ENCODE measurements at regions of chr13 and their contacts with region 1.

Region 1: DNA sequence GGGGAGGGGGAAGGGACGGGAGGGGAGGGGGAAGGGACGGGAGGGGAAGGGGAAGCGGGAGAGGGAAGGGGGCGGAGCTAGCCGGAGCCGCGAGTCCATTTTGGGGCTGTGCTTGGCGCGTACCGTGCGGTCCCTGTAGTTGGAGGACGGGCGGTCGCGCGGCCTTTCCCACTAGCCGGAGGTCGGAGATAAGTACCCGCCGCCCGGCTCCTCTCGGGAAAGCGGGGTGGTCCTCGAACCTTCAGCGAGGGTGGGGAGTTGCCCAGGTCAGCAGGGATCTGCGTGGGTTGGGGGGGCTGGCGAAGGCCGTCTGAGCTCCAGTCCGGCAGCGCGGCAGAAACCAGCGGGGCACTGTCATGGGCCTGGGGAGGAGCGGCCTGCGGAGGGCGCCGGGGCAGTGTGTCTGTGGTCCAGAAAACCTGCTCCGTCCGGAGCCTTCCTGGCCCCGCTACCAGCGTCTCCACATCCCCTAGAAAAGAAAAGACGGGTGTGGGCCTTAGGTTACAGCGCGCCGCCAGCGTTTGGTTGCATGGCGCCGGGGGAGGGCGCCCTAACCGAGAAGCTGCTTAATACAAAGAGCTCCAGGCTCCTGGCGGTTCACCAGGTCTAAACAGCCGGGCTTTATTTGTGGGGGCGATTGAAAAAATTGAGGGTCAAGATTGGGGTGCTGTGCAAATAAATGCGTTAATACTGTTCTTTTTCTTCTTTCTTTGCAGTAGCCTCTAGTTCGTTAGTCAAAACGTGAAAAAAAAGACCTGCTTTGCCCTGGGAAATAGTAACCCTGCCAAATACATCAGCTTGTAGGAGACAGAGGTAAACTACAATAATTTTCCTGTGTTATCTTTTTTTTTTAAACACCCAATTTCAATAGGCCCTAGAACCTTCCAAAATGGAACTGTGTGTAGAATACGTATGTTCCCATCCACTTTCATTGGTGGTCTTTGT is at the start of gene TRIM13:
- DNase-seq: peak; percentile 88
- CTCF ChIP-seq: peak; percentile 76

Region 2: DNA sequence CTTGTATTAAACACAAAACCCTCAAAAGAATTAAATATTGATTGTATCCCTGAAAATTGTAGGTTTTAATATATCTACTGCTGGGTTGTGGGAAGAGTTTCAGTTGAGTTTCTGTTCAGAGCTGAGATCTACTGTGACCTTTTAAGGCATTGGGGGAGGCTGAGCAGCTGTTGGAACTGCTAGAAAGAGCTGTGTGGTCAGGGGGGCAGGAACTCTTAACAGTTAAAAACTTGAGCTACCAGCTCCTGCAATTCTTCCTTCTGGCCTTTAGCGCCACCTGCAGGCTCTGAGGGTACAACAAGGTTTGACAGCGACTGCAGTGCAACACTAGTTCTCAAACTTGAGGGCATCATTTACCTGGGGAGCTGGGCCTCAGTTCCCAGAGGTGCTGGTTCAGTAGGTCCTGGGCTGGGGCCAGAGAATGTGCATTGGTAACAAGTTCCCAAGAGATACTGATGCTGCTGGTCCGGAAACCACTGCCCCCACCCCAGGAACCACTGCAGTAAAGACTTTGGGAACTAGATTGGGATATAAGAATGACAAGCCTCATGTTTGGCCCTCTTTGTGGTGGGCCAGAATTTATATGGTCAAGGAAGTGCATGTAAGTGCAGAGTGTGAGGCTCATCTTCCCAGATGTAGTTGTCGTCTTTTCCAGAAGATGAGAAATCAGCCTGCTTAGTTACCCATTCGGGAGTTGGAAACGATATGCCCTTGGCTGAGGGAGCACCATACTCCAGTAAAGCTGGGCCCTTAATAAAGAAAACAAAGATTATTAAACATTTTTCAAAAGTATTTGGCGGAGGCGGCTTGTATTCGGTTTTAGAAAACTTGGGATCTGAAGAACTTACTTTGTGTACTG is 914.9 kb after region 1 on chr13:
- in situ Hi-C with region 1: loop called (anchors 10 kb)
- DNase-seq: peak; percentile 80
- CTCF ChIP-seq: peak; percentile 78

Region 3: DNA sequence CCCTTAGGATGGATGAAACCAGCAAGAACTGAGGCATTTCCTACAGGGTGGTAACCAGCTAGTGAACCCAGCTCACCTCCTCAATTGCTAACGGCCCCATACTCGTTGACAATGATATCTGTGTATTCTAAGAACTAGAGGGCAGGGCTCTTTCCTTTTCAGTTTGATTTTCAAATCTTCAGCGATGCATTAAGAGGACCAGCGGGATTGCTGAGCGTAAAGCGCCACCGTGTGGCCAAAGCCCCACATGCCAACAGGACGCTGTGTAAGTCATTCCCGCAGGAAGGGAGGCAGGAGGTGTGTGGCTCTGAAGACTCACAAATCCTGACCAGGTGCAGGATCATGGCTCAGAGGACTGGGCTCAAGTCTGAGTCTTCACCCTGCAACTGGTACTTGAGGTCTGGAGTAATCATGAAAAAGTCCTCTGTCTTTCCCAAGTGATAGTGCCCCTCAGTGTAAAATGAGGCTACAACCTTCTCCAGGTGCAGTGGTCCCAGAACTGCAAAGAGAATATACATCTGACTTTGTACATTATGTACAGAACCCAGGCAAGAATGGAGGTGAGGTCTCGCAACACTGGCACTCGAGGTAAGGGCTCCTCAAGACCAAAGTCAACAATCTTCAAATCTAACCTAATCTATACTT is 1072.9 kb after region 1 on chr13:
- in situ Hi-C with region 1: loop called (anchors 25 kb)
- DNase-seq: peak; percentile 75
- CTCF ChIP-seq: peak; percentile 93